CD8-positive, alpha-beta T cell (primary cell): ENCODE measurements at regions of chr1 and their contacts with region 1.

Region 1: DNA sequence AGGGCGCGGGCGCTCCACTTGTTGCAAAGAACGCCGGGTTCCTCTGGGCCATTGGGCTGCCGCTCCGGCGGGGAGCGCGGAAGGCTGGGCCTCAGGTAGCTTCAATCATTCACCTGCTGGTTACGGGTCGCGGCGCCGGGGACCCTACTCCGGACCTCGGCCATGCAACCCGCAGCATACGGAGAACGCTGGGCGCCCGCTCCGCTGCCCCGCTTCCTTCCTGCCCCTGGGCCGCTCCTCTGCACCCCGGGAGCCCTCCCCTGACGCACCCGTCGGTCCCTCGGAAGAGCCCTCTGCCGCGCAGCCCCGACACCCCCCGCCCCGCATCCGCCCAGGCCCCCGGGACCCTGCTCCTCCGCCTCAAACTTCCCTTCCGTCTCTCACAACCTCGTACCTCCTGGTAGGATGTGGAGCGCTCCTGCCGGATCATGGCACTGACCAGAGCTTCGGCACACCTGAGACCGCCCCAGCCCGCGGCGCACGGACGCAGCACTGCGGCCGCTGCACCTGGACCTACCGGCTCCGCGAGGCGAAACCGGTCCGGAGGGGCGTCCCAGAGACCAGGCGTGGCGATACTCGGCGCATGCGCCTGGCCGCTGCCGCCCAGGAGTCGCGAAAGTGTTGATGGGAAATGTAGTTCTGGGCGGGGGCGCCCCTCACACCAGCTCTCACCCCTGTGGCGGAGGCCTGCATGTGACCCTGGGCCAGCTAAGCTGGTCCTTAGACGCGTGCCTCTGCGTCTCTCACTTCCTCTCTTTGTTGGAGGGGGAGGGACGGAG is at the start of gene PACC1:
- DNase-seq: peak; percentile 73 to 95 (median 86)
- ATAC-seq: peak; percentile 91
- H3K4me3 ChIP-seq: peak within 1 kb of the TSS; percentile 80 to 98
- H3K4me3 Mint-ChIP-seq: peak within 1 kb of the TSS; percentile 97
- H3K27ac ChIP-seq: peak within 1 kb of the TSS; percentile 59 to 67
- H3K27ac Mint-ChIP-seq: peak within 1 kb of the TSS; percentile 92
- H3K4me1 ChIP-seq: peaks cover 25% of the 10 kb centered on the region
- H3K4me1 Mint-ChIP-seq: peaks cover 40% of the 10 kb centered on the region
- H3K27me3 ChIP-seq: no peaks in the 10 kb centered on the region
- H3K27me3 Mint-ChIP-seq: no peaks in the 10 kb centered on the region
- CTCF ChIP-seq: no peak
- total RNA-seq, gene PACC1: 2.6 to 2.9 TPM

Region 2: DNA sequence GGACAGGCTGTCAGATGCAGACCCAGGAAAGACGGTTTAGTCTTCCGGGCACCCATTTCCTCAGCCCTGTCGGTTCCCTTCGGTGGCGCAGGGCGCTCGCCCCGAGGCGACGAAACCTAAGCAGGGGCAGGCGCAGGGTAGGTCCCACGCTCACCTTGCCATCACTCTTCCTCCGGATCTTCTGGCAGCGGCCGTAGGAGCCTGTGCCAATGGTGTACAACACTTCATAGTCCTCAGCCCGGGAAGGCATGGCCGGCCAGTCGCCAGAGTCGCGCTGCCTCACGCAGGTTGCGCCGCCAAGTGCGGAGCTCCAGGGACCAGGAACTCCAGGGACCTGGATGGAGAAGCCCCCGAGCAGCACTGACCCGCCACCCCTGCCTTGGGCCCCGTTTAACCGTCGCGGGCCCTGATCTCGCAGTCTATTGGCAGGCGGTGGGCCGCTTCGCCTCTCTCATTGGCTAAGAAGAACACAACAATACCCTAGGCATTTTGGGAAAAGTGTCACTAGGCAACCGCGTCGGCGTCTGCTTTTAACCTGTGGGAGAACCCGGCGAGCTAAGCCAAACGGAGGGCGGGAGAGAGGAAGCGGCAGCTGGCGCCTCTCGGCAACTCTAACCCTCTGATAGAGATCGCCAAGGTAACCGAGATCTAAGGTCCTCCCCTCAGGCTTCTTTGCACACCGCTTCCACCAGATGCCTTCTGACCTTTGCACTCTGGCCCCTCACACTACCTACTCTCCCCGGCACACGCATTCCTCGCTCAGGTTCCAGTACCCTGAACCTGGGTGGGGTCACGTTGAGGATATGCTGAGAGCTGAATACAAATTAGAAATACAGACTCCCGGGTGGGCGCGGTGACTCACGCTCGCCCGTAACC is 739.0 kb before region 1 on chr1 and contains the start of gene NEK2:
- CTCF ChIA-PET with region 1: interaction called, 3 read pairs
- POLR2A ChIA-PET with region 1: interaction called, 4 read pairs
- intact Hi-C with region 1: loop called in 1 of 2 experiments (anchors 1 kb)
- DNase-seq: peak; percentile 61 to 92 (median 84)
- ATAC-seq: peak; percentile 89
- H3K4me3 ChIP-seq: peak within 1 kb of the TSS; percentile 67 to 85
- H3K4me3 Mint-ChIP-seq: peak within 1 kb of the TSS; percentile 91
- H3K27ac ChIP-seq: peak within 1 kb of the TSS; percentile 18 to 22
- H3K27ac Mint-ChIP-seq: peak within 1 kb of the TSS; percentile 76
- H3K4me1 ChIP-seq: peaks cover 7% of the 10 kb centered on the region
- H3K4me1 Mint-ChIP-seq: peaks cover 14% of the 10 kb centered on the region
- H3K27me3 ChIP-seq: no peaks in the 10 kb centered on the region
- H3K27me3 Mint-ChIP-seq: no peaks in the 10 kb centered on the region
- CTCF ChIP-seq: no peak
- total RNA-seq, gene NEK2: 0.19 to 0.35 TPM

Region 3: GRCh38 chr1:211830330-211831142 is 584.0 kb before region 1 on chr1 and contains the start of gene LPGAT1:
- CTCF ChIA-PET with region 1: no interaction called
- POLR2A ChIA-PET with region 1: no interaction called
- intact Hi-C with region 1: loop called in 1 of 2 experiments (anchors 10 kb)
- DNase-seq: peak; percentile 37 to 84 (median 71)
- ATAC-seq: peak; percentile 79
- H3K4me3 ChIP-seq: peak within 1 kb of the TSS; percentile 69 to 75
- H3K4me3 Mint-ChIP-seq: peak within 1 kb of the TSS; percentile 90
- H3K27ac ChIP-seq: peak within 1 kb of the TSS; percentile 50 to 78
- H3K27ac Mint-ChIP-seq: peak within 1 kb of the TSS; percentile 92
- H3K4me1 ChIP-seq: peaks cover 44% of the 10 kb centered on the region
- H3K4me1 Mint-ChIP-seq: peaks cover 64% of the 10 kb centered on the region
- H3K27me3 ChIP-seq: no peaks in the 10 kb centered on the region
- H3K27me3 Mint-ChIP-seq: no peaks in the 10 kb centered on the region
- CTCF ChIP-seq: peak; percentile 51
- total RNA-seq, gene LPGAT1: 17.9 to 19.1 TPM

Region 4: DNA sequence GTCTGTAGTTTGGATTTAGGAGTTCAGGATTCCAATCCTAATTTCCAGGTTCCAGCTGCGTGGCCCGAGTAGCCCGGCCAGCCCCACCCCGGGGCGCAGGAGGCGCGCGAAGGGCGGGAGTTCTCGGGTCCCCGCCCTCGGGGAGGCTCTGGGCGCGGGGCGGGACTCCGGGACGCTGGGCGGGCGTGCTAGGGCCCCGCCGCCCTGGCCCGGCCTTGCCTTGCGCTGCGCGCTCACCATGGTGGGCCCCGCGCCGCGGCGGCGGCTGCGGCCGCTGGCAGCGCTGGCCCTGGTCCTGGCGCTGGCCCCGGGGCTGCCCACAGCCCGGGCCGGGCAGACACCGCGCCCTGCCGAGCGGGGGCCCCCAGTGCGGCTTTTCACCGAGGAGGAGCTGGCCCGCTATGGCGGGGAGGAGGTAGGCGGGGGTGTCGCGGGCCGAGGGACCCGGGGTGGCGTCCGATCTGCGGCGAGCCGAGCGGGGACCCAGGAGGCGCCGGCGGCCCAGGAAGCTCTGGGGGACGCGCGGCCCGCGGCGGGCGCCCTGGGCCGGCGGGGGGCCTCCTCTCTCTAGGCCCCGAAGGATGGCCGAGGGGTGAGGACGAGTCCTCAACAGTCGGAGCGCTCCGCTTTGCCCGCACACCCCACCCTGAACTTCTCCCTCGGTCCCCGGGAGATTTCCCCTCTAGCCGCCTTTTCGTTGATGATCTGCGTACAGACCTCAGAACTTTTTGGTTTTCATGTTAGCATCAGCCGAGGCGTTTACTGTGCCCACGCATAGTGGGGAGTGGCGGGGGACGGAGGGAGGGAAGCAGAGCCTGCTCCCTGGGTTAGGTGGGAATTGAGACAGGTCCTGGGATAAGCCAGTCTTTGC is 18.4 kb after region 1 on chr1 and contains the start of gene NENF:
- CTCF ChIA-PET with region 1: interaction called, 4 read pairs
- POLR2A ChIA-PET with region 1: interaction called, 13 read pairs
- intact Hi-C with region 1: loop called (anchors 1 kb)
- DNase-seq: peak; percentile 44 to 86 (median 70)
- ATAC-seq: peak; percentile 99
- H3K4me3 ChIP-seq: peak within 1 kb of the TSS; percentile 61 to 71
- H3K4me3 Mint-ChIP-seq: peak within 1 kb of the TSS; percentile 81
- H3K27ac ChIP-seq: peak within 1 kb of the TSS in 1 of 2 experiments; percentile 55
- H3K27ac Mint-ChIP-seq: peak within 1 kb of the TSS; percentile 74
- H3K4me1 ChIP-seq: peaks cover 17% of the 10 kb centered on the region
- H3K4me1 Mint-ChIP-seq: peaks cover 34% of the 10 kb centered on the region
- H3K27me3 ChIP-seq: no peaks in the 10 kb centered on the region
- H3K27me3 Mint-ChIP-seq: no peaks in the 10 kb centered on the region
- CTCF ChIP-seq: no peak
- total RNA-seq, gene NENF: 17.7 to 20.3 TPM

Region 5: GRCh38 chr1:213015099-213016050 is 600.9 kb after region 1 on chr1 and contains the start of gene ANGEL2:
- CTCF ChIA-PET with region 1: no interaction called
- POLR2A ChIA-PET with region 1: no interaction called
- intact Hi-C with region 1: loop called (anchors 1 to 5 kb)
- DNase-seq: peak; percentile 90 to 99 (median 95)
- ATAC-seq: peak; percentile 97
- H3K4me3 ChIP-seq: peak within 1 kb of the TSS; percentile 90 to 96
- H3K4me3 Mint-ChIP-seq: peak within 1 kb of the TSS; percentile 100
- H3K27ac ChIP-seq: peak within 1 kb of the TSS; percentile 90 to 92
- H3K27ac Mint-ChIP-seq: peak within 1 kb of the TSS; percentile 100
- H3K4me1 ChIP-seq: peaks cover 19% of the 10 kb centered on the region
- H3K4me1 Mint-ChIP-seq: peaks cover 40% of the 10 kb centered on the region
- H3K27me3 ChIP-seq: no peaks in the 10 kb centered on the region
- H3K27me3 Mint-ChIP-seq: no peaks in the 10 kb centered on the region
- CTCF ChIP-seq: no peak
- total RNA-seq, gene ANGEL2: 47.4 to 52.5 TPM